ENCODE measurements at regions of chr16 and their contacts with region 1.

Region 1: GRCh38 chr16:30557957-30558788 is at the start of gene ZNF764:
- DNase-seq: peak; percentile 98
- H3K4me3 ChIP-seq: peak within 1 kb of the TSS; percentile 77 to 93 (median 92)
- H3K27ac ChIP-seq: peak within 1 kb of the TSS; percentile 81
- H3K4me1 ChIP-seq: peaks cover 9% of the 10 kb centered on the region
- H3K27me3 ChIP-seq: no peaks in the 10 kb centered on the region
- CTCF ChIP-seq: no peak
- total RNA-seq, gene ZNF764: 5.5 to 6.6 TPM

Region 2: DNA sequence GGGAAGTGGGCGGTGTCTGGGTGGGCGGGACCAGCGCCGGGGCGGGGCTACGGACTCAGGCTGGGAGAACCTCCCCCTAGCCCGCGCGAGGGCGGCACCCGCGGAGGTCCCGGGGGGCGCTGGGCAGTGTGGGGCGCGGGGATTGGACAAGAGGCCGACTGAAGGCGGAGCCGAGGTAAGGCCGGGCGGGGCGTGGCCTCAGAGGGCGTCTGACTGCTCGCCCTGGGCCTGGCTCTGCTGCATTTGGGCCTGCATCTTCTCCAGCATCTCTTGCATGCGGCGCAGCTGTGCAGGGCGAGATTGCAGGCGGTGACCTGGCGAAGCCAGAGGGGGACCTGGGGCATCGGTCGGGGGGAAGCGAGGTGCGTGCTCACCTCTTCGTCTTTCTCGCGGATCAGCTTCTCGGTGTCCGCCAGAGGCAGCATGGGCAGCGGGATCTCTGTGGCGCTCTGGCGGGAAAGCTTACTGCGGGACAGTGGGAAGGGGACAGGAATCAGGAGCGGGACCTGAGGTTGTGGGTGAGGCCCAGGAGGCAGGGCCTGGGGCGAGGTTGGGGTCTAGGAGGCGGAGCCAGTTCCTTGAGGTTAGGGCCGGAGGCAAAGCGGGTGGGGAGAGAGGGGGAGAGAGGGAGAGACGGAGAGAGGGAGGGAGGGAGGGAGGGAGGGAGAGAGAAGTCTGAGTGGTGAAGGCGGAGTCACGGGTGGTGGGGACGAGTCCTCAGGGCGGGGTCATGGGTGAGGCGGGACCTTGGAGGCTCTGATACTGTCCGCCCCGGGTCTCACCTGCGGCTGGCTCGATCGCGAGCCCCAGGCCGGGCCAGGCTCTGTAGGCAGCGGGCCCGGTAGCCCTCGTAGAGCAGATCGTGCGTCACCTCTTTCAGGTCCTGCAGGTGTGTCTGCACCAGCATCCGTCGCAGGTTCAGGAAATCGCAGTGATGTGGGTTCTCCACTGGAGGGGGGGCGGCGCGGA is 179.7 kb before region 1 on chr16:
- CTCF ChIA-PET with region 1: no interaction called
- dilution Hi-C with region 1: no loop called
- in situ Hi-C with region 1: no loop called
- intact Hi-C with region 1: no loop called
- DNase-seq: peak; percentile 97
- H3K4me3 ChIP-seq: peak overlapping the region; percentile 67 to 78 (median 73)
- H3K27ac ChIP-seq: peak overlapping the region; percentile 58
- H3K4me1 ChIP-seq: peaks cover 16% of the 10 kb centered on the region
- H3K27me3 ChIP-seq: no peaks in the 10 kb centered on the region
- CTCF ChIP-seq: peak; percentile 1 to 35

Region 3: DNA sequence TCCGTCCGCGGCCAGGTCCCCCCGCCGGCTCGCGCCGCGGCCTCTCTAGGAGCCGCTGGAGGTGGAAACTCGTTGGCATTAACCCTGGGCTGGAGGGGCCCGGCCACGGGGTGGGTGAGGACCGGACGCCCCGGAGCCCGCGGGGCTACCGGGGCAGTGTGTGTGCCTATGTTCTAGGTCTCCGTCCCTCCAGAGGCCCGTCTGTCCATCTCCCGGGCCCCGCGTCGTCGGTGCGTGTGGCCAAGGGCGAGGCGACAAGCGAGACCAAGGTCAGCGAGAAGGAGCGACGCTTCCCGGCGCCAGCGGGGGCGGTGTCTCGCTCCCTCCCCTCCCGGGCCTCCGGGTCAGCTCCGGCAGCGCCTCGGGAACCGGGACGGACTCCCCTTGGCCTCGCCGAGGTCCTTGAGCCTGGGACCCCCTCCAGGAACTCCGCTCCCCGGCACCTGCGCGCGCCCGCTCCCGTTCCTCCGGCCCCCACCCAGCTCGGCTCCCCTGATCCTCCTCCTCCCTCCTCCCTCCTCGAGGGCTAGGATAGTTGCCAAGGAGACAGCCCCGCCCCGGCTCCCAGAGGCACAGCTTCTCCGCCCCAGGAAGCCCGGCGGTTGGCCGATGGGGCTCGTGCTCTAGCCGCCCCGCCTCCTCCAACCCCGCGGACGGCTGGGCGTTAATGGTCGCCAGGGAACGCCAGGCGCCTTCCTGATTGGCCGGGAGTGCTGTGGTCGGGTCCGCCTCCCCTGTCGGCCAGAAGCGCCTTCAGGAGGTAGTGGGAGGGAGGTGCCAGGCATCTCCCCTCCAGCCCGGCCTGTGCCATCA is 31.1 kb before region 1 on chr16:
- CTCF ChIA-PET with region 1: no interaction called
- dilution Hi-C with region 1: no loop called
- in situ Hi-C with region 1: no loop called
- intact Hi-C with region 1: loop called (anchors 1 kb)
- DNase-seq: peak; percentile 98
- H3K4me3 ChIP-seq: peak overlapping the region; percentile 65 to 96 (median 90)
- H3K27ac ChIP-seq: peak overlapping the region; percentile 88
- H3K4me1 ChIP-seq: peaks cover 18% of the 10 kb centered on the region
- H3K27me3 ChIP-seq: no peaks in the 10 kb centered on the region
- CTCF ChIP-seq: peak in 1 of 2 donors; percentile 42

Region 4: GRCh38 chr16:30534368-30535105 is 23.6 kb before region 1 on chr16 and contains the start of gene ZNF747:
- CTCF ChIA-PET with region 1: no interaction called
- dilution Hi-C with region 1: no loop called
- in situ Hi-C with region 1: no loop called
- intact Hi-C with region 1: loop called (anchors 1 kb)
- DNase-seq: peak; percentile 75
- H3K4me3 ChIP-seq: peak within 1 kb of the TSS; percentile 50 to 64 (median 57)
- H3K27ac ChIP-seq: peak within 1 kb of the TSS; percentile 71
- H3K4me1 ChIP-seq: peaks cover 15% of the 10 kb centered on the region
- H3K27me3 ChIP-seq: no peaks in the 10 kb centered on the region
- CTCF ChIP-seq: peak in 1 of 2 donors; percentile 7
- total RNA-seq, gene ZNF747: 6.7 to 11.0 TPM

Region 5: GRCh38 chr16:30571695-30572600 is 13.8 kb after region 1 on chr16 and contains the start of gene ZNF688:
- CTCF ChIA-PET with region 1: no interaction called
- dilution Hi-C with region 1: no loop called
- in situ Hi-C with region 1: no loop called
- intact Hi-C with region 1: loop called (anchors 1 kb)
- DNase-seq: peak; percentile 94
- H3K4me3 ChIP-seq: peak within 1 kb of the TSS; percentile 55 to 85 (median 75)
- H3K27ac ChIP-seq: peak within 1 kb of the TSS; percentile 70
- H3K4me1 ChIP-seq: peaks cover 35% of the 10 kb centered on the region
- H3K27me3 ChIP-seq: no peaks in the 10 kb centered on the region
- CTCF ChIP-seq: no peak
- total RNA-seq, gene ZNF688: 6.2 to 10.6 TPM

Region 6: GRCh38 chr16:30585400-30586189 is 27.4 kb after region 1 on chr16 and contains the start of gene ZNF785:
- CTCF ChIA-PET with region 1: no interaction called
- dilution Hi-C with region 1: no loop called
- in situ Hi-C with region 1: no loop called
- intact Hi-C with region 1: loop called (anchors 1 kb)
- DNase-seq: peak; percentile 99
- H3K4me3 ChIP-seq: peak within 1 kb of the TSS; percentile 39 to 69 (median 58)
- H3K27ac ChIP-seq: peak within 1 kb of the TSS; percentile 42
- H3K4me1 ChIP-seq: peaks cover 9% of the 10 kb centered on the region
- H3K27me3 ChIP-seq: no peaks in the 10 kb centered on the region
- CTCF ChIP-seq: peak in 1 of 2 donors; percentile 30
- total RNA-seq, gene ZNF785: 7.6 to 8.0 TPM

Region 7: DNA sequence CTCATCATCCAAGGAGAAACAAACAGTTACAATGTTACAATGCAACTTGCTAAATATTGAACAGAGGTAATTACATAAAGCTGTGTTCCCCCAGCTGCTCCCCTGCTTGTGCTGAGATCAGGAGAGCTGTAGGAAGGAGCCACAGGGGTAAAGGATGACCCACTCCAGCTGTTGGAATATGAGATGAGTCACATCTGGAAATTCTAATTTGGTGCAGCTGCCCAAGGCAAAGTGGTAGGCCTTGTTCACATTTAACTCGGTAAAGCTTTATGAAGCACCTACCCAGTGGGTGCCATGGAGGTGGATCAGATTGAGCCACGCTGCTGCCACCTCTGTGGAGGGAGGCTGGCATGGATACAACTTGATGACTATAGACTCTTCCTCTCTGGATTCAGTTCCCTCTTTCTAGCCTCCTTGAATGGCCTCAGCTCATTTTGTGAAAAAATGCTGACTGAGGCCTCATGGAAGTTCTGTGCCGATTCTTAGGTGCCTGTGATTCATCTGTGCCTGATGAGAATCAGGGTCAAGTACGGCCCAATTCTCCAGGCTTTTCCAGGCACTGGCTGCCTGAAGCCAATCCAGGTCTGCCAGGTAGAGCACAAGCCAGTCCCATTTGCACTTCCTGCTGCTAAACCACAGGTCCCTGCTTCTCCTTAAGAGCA is 44.6 kb after region 1 on chr16:
- CTCF ChIA-PET with region 1: interaction called, 3 read pairs
- dilution Hi-C with region 1: no loop called
- in situ Hi-C with region 1: no loop called
- intact Hi-C with region 1: loop called (anchors 5 kb)
- DNase-seq: no peak
- H3K4me3 ChIP-seq: no peak overlapping the region
- H3K27ac ChIP-seq: no peak overlapping the region
- H3K4me1 ChIP-seq: peaks cover 3% of the 10 kb centered on the region
- H3K27me3 ChIP-seq: no peaks in the 10 kb centered on the region
- CTCF ChIP-seq: no peak

Measured in mammary epithelial cell (primary cell).